T-cell (primary cell): ENCODE measurements at regions of chr11 and their contacts with region 1.

Region 1: GRCh38 chr11:110565357-110566336 is 135.9 kb downstream of the FDX1 start:
- DNase-seq: peak in 10 of 35 experiments; percentile 2 to 43 (median 10)
- ATAC-seq: peak in 2 of 4 experiments; percentile 34 to 44
- H3K4me3 ChIP-seq: no peak overlapping the region
- H3K4me3 Mint-ChIP-seq: no peak overlapping the region
- H3K27ac ChIP-seq: no peak overlapping the region
- H3K27ac Mint-ChIP-seq: no peak overlapping the region
- H3K4me1 ChIP-seq: peaks cover 0 to 9% of the 10 kb centered on the region in 2 experiments
- H3K4me1 Mint-ChIP-seq: no peaks in the 10 kb centered on the region
- H3K27me3 ChIP-seq: no peaks in the 10 kb centered on the region
- H3K27me3 Mint-ChIP-seq: peaks cover 5 to 9% of the 10 kb centered on the region in 2 donors

Region 2: GRCh38 chr11:110613197-110613918 is 47.7 kb after region 1 on chr11:
- CTCF ChIA-PET with region 1: no interaction called
- POLR2A ChIA-PET with region 1: interaction called in 1 of 2 experiments, 14 read pairs
- DNase-seq: no peak
- ATAC-seq: no peak
- H3K4me3 ChIP-seq: no peak overlapping the region
- H3K4me3 Mint-ChIP-seq: no peak overlapping the region
- H3K27ac ChIP-seq: no peak overlapping the region
- H3K27ac Mint-ChIP-seq: no peak overlapping the region
- H3K4me1 ChIP-seq: no peaks in the 10 kb centered on the region
- H3K4me1 Mint-ChIP-seq: no peaks in the 10 kb centered on the region
- H3K27me3 ChIP-seq: no peaks in the 10 kb centered on the region
- H3K27me3 Mint-ChIP-seq: peaks cover 0 to 3% of the 10 kb centered on the region in 2 donors